ENCODE measurements at regions of chr9 and their contacts with region 1.

Region 1: GRCh38 chr9:74952281-74953151 is at the start of gene C9orf40:
- DNase-seq: peak; percentile 94 to 98
- ATAC-seq: peak; percentile 99
- H3K4me3 ChIP-seq: peak within 1 kb of the TSS; percentile 32 to 82
- H3K27ac ChIP-seq: peak within 1 kb of the TSS; percentile 51 to 90
- H3K4me1 ChIP-seq: no peaks in the 10 kb centered on the region
- H3K27me3 ChIP-seq: no peaks in the 10 kb centered on the region
- total RNA-seq, gene C9orf40: 3.8 to 5.8 TPM

Region 2: DNA sequence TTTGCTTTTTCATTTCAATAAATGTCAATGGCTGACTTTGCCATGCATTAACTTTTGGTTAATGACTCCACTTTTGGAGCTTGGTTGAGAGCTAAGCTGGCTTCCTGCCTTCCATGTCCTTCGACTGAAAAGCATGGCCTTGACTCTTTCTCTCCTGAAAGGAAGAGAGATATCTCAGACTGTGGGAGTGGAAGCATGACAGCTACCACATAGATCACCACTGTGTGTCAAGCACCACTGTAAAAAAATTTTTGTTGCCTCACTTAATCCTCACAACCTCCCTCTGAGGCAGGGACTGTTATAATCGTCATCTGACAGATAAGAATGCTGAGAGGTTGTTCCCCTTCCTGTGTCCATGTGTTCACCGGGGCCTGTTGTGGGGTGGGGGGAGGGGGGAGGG is 270.6 kb before region 1 on chr9:
- intact Hi-C with region 1: no loop called
- DNase-seq: no peak
- ATAC-seq: no peak
- H3K4me3 ChIP-seq: no peak overlapping the region
- H3K27ac ChIP-seq: no peak overlapping the region
- H3K4me1 ChIP-seq: no peaks in the 10 kb centered on the region
- H3K27me3 ChIP-seq: no peaks in the 10 kb centered on the region

Region 3: GRCh38 chr9:75027187-75028107 is 74.9 kb after region 1 on chr9:
- intact Hi-C with region 1: loop called in 1 of 2 experiments (anchors 2 kb)
- DNase-seq: peak; percentile 76 to 87
- ATAC-seq: peak; percentile 80
- H3K4me3 ChIP-seq: peak overlapping the region; percentile 58 to 62
- H3K27ac ChIP-seq: peak overlapping the region in 1 of 2 donors; percentile 68
- H3K4me1 ChIP-seq: peaks cover 2% of the 10 kb centered on the region in 2 donors
- H3K27me3 ChIP-seq: no peaks in the 10 kb centered on the region